OCI-LY7 (cell line): ENCODE measurements at regions of chr22 and their contacts with region 1.

Region 1: DNA sequence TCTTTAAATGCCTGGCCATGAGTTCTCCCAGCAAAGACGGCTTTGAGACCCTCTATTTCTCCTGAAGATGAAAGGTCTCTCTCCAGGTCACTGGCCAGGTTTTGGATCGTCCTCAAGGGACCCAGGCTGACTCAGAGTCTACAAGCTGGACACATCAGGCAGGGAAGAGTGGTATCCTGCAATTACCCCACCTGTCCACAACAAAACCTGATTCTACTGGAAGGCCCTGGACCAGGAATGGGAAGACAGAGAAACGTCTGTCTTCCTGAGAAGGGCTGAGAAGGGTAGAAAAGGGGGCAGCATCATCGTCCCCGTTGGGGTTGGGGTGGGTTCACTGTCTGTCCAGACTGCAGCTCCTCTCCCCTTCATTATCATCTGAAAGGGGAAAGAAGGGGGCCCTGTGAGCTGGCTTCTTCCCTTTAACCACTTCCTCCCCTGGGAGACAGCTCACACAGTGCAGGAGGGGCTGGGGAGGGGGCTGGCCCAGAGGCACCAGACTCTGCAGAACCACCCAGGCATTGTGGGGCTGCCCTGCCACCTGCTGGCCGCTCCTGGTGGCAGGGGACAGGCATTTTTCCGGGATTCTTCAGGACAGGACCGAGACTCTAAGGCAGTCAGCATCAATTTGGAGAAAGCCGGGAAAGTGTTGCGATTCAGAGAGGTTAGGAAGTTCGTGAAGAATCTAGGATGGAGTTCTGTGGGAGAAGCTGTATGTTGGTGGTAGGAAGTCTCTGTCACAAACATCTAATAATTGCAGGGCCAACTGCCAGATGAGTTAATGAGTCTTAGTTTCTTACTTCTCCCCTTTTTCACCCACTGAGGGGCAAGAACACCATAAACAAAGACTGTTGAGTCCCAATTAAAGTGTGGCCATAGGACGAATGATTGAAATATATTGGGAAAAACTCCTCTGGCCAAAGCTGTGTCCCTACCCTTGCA is 57.6 kb downstream of the SYN3 start:
- DNase-seq: peak; percentile 73
- H3K4me3 ChIP-seq: no peak overlapping the region
- H3K27ac ChIP-seq: no peak overlapping the region
- H3K4me1 ChIP-seq: peaks cover 15% of the 10 kb centered on the region
- CTCF ChIP-seq: peak; percentile 98

Region 2: DNA sequence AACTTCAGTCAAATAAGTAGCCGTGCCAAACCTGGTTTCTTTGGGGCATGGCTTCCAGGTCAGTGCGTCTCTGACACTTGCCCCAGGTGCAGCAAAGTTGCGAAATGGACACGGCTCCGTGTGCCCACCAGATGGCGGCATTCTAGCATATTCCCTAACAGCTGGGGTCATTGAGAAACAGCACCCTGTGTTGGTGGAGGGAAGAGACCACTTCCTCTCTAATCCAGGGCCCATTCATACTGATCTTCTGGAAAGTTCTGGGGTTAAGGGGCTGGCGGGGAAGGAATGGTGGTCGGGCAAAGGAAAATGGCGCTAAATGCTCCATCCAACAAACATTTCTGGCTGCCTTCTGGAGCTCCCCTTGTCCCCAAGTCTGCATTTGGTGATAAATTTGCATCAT is 340.3 kb before region 1 on chr22:
- CTCF ChIA-PET with region 1: no interaction called
- POLR2A ChIA-PET with region 1: no interaction called
- intact Hi-C with region 1: loop called (anchors 1 kb)
- DNase-seq: peak; percentile 66
- H3K4me3 ChIP-seq: no peak overlapping the region
- H3K27ac ChIP-seq: no peak overlapping the region
- H3K4me1 ChIP-seq: no peaks in the 10 kb centered on the region
- CTCF ChIP-seq: peak; percentile 82

Region 3: DNA sequence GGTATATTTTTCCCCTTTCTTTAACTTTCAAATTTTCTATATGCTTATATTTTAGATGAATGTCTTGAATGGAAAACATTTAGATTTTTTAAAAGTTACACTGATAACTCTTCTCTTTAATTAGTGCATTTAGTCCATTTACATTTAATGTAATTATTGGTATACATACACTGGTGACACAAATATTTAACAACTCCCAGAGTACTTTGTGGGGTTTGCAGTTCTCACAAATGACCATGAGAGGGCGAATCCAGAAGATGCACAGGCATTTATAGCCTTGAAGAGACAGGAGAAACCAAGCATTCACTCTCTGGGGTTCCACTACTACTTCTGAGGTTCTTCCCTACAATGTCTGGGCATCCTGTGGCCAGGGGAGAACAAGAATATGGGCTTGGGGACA is 74.0 kb before region 1 on chr22:
- CTCF ChIA-PET with region 1: no interaction called
- POLR2A ChIA-PET with region 1: no interaction called
- intact Hi-C with region 1: loop called (anchors 10 kb)
- DNase-seq: peak; percentile 47
- H3K4me3 ChIP-seq: no peak overlapping the region
- H3K27ac ChIP-seq: no peak overlapping the region
- H3K4me1 ChIP-seq: no peaks in the 10 kb centered on the region
- CTCF ChIP-seq: peak; percentile 82

Region 4: GRCh38 chr22:32967386-32968101 is 33.1 kb before region 1 on chr22:
- CTCF ChIA-PET with region 1: no interaction called
- POLR2A ChIA-PET with region 1: no interaction called
- intact Hi-C with region 1: no loop called
- DNase-seq: no peak
- H3K4me3 ChIP-seq: no peak overlapping the region
- H3K27ac ChIP-seq: no peak overlapping the region
- H3K4me1 ChIP-seq: no peaks in the 10 kb centered on the region
- CTCF ChIP-seq: no peak

Region 5: DNA sequence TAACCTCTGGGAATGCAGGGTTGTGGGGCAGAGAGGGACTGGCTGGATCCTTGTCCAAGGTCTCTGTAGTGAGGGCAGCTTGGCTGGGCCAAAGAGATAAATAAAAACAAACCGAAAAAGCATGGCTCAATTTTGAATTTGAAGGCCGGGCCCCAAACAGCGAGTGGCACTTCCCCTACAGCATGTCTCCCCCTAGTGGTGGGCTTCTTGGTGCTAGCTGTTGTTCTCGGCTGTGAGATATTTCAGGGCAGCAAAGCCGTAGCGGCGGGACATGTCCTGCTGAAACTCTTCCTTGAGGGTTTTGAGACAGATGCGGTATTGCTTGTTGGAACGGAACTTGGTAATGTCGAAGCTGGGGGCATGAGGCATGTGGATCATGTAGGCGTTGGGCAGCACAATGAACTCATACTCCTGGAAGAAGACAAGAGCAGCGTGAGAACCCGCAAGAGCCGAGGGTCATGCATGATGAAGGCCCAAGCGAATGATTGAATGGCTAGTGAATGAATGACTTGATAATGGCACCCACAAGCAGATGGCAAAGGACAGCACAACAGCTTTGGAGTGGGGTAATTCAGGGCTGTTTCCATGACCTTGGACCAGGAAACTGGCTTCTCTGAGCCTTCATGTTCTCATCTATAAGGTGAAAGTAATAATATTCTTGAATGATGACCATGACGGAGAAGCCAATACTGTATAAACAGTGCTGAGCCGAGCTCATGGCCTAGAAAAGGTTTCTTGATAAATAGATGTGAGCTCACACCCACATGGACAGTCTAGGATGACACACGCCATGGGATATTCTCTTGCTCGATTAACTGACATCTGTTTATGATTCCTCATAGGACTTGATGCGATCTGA is 273.8 kb after region 1 on chr22:
- CTCF ChIA-PET with region 1: no interaction called
- POLR2A ChIA-PET with region 1: no interaction called
- intact Hi-C with region 1: no loop called
- DNase-seq: peak; percentile 87
- H3K4me3 ChIP-seq: no peak overlapping the region
- H3K27ac ChIP-seq: peak overlapping the region; percentile 99
- H3K4me1 ChIP-seq: peaks cover 64% of the 10 kb centered on the region
- CTCF ChIP-seq: peak; percentile 96

Region 6: DNA sequence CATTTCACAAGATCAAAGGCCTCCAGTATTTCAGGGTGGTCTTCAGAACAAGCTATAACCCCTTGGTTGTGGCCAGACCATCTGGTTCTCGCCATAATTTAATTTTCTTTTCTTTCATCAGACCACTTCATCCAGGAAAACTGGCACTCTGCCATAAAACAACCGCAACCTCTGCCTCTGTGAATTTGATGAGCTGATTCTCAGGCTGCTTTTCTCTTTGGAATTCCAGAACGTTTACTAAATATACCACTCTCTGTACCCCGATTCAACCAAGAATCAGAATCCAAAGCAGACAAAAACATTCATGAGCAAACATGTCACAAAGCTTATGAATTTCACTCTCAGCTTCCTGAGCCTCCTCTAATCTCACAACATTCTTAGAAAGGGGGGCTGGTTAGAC is 389.3 kb after region 1 on chr22:
- CTCF ChIA-PET with region 1: no interaction called
- POLR2A ChIA-PET with region 1: interaction called, 10 read pairs
- intact Hi-C with region 1: no loop called
- DNase-seq: no peak
- H3K4me3 ChIP-seq: no peak overlapping the region
- H3K27ac ChIP-seq: no peak overlapping the region
- H3K4me1 ChIP-seq: no peaks in the 10 kb centered on the region
- CTCF ChIP-seq: no peak